ENCODE measurements at regions of chr18 and their contacts with region 1.

Region 1: GRCh38 chr18:80108728-80109675 is at the start of gene ADNP2:
- DNase-seq: peak; percentile 81
- H3K4me3 Mint-ChIP-seq: peak within 1 kb of the TSS; percentile 86
- H3K27ac Mint-ChIP-seq: peak within 1 kb of the TSS; percentile 86
- H3K4me1 Mint-ChIP-seq: peaks cover 24% of the 10 kb centered on the region
- H3K27me3 Mint-ChIP-seq: peaks cover 6% of the 10 kb centered on the region
- total RNA-seq, gene ADNP2: 29.0 TPM in 2 replicates

Region 2: GRCh38 chr18:80034068-80034851 is 74.7 kb before region 1 on chr18 and contains the start of gene RBFA:
- intact Hi-C with region 1: loop called (anchors 1 kb)
- DNase-seq: peak; percentile 98
- H3K4me3 Mint-ChIP-seq: peak within 1 kb of the TSS; percentile 87
- H3K27ac Mint-ChIP-seq: peak within 1 kb of the TSS; percentile 88
- H3K4me1 Mint-ChIP-seq: peaks cover 25% of the 10 kb centered on the region
- H3K27me3 Mint-ChIP-seq: peaks cover 4% of the 10 kb centered on the region
- total RNA-seq, gene RBFA: 48.5 and 50.3 TPM in 2 replicates